WTC11 (cell line): ENCODE measurements at regions of chr6 and their contacts with region 1.

Region 1: DNA sequence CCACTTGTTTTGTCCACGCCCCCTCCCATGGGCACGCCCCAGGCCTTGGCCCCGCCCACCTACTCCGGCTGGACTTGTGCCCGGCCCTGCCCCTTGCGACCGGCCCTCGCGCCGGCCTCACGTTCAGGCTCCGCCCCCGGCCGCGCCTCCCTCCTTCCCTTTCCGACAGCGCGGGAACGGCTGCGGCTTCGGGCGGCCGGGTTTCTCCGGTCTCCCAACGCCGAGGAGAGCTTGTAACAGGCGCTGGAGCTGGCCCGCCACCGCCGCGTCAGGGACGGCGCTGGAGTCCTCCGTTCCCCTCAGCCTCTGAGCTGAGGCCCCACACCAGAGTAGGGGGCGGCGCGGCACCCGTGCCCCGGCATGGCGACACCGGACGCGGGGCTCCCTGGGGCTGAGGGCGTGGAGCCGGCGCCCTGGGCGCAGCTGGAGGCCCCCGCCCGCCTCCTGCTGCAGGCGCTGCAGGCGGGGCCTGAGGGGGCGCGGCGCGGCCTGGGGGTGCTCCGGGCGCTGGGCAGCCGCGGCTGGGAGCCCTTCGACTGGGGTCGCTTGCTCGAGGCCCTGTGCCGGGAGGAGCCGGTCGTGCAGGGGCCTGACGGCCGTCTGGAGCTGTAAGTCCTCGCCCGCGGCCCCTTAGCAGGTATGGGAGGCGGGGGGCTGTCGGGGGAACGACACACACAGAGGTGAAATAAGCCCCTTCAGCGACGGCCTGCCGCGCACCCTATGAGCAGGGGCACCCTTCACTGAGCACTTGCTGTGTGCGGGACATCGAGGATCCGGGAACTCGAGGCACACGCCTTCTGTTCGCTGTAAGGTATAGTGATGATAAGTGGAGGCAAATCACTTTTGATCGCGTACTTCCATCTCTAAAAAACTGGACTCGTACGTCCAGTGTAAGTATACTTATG is at the start of gene FANCE:
- DNase-seq: peak; percentile 100
- ATAC-seq: peak; percentile 95
- H3K4me3 Mint-ChIP-seq: peak within 1 kb of the TSS; percentile 68
- H3K27ac Mint-ChIP-seq: peak within 1 kb of the TSS; percentile 53; the same call in 1 of the 2 replicates
- H3K4me1 Mint-ChIP-seq: peaks cover 34% of the 10 kb centered on the region
- H3K27me3 Mint-ChIP-seq: peaks cover 11% of the 10 kb centered on the region
- CTCF ChIP-seq: no peak
- total RNA-seq, gene FANCE: 15.7 to 22.3 TPM (median 17.6 TPM) in 3 replicates

Region 2: DNA sequence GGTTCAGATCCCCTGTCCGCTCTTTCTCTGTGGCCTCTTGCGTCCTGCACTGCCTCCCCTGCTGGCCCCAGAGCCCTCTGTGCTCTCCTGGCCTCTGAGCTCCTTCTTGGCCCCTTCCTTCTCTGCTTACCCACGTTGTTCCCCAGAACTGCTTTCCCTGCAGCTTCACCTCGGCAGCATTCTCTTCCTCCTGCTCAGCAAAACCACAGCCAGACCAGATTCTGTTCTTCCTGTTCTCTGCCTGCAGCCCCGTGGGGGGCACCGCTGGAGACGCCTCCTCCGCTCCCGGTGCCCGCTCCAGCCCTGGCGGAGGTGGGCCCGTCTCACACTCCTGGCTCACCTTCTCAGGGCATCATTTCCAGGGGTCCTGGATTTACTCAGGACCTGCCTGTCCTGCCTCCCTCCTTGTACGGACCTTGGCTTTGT is 371.0 kb before region 1 on chr6:
- CTCF ChIA-PET with region 1: no interaction called
- POLR2A ChIA-PET with region 1: no interaction called
- DNase-seq: no peak
- ATAC-seq: no peak
- H3K4me3 Mint-ChIP-seq: no peak overlapping the region
- H3K27ac Mint-ChIP-seq: peak overlapping the region; percentile 97
- H3K4me1 Mint-ChIP-seq: peaks cover 14% of the 10 kb centered on the region
- H3K27me3 Mint-ChIP-seq: no peaks in the 10 kb centered on the region
- CTCF ChIP-seq: no peak

Region 3: DNA sequence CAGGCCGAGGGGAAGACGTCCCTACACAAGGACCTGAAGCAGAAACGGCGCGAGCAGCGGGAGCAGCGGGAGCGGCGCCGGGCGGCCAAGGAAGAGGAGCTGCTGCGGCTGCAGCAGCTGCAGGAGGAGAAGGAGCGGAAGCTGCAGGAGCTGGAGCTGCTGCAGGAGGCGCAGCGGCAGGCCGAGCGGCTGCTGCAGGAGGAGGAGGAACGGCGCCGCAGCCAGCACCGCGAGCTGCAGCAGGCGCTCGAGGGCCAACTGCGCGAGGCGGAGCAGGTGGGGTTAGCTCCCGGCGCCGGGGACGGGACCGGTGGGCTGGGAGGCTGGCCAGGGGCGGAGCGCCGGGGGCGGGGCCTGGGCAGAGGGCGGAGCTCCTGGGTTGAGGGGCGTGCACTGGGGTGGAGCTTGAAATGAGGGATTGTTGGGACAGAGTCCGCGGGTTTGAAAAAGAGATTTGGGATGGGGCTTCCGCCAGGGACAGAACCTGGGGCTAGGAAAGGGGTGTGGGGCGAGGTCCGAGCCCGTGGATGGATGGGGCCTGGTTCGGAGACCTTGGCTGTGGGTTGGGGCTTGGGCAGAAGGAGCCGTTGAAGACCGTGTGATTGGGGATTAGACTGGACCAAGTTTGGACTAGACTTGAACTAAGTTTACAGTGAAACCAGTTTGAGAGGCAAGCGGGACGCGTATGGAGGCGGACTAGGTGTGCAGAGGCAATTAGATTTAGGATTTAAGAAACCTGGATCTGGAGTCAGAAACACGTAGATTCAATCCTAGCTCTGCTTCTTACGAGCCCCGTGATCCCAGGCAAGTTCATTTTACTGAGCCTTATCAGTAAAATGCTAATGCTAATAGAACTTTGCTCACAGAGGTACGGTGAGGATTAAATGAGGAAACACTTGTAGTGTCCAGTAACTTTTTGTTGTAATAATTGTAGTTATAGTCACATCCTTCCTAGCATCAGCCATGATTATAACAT is 134.0 kb before region 1 on chr6:
- CTCF ChIA-PET with region 1: interaction called, 20 read pairs
- POLR2A ChIA-PET with region 1: interaction called, 5 read pairs
- DNase-seq: peak; percentile 96
- ATAC-seq: peak; percentile 99
- H3K4me3 Mint-ChIP-seq: peak overlapping the region; percentile 86
- H3K27ac Mint-ChIP-seq: peak overlapping the region; percentile 27; the same call in 1 of the 2 replicates
- H3K4me1 Mint-ChIP-seq: peaks cover 21% of the 10 kb centered on the region
- H3K27me3 Mint-ChIP-seq: peaks cover 25% of the 10 kb centered on the region
- CTCF ChIP-seq: no peak

Region 4: DNA sequence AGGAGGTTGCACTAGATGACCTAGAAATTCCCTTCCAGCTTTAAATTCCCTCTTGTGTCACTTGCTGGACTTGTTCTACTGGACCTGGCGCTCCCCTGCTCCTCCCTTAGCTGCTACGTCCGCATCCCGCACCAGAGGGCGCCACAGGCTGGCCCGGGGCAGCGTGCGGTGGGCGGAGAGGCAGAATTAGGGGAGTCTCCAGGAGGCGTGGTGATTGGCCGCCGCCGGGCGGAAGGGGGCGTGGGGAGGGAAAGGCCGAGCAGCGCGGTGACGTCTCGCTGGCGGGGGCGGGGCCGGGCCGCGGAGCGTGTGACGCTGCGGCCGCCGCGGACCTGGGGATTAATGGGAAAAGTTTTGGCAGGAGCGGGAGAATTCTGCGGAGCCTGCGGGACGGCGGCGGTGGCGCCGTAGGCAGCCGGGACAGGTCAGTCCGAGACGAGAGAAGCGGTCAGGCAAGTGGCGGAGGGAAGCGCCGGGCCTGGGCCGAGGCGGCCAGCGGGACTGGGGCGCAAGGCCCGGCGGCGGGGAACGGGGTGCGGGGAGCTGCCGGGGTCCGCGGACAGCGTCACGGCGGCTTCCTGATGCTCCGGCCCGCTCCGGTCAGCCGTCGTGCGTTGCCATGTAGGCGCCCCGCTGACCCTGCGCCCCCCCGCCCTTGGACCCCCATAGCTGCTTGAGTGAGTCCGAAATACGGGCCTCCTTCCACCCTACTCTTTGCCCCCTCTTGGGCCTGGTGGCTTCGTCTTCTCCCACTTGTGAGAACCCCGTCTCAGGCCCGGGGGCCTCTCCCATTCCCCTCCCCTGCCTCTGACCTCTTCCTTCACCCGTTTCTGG is 110.0 kb before region 1 on chr6 and contains the start of gene PPARD:
- CTCF ChIA-PET with region 1: interaction called, 157 read pairs
- POLR2A ChIA-PET with region 1: interaction called, 5 read pairs
- DNase-seq: peak; percentile 99
- ATAC-seq: peak; percentile 97
- H3K4me3 Mint-ChIP-seq: peak within 1 kb of the TSS; percentile 86
- H3K27ac Mint-ChIP-seq: peak within 1 kb of the TSS; percentile 87
- H3K4me1 Mint-ChIP-seq: peaks cover 20% of the 10 kb centered on the region
- H3K27me3 Mint-ChIP-seq: peaks cover 8% of the 10 kb centered on the region
- CTCF ChIP-seq: peak; percentile 93
- total RNA-seq, gene PPARD: 14.7 to 17.1 TPM (median 16.8 TPM) in 3 replicates

Region 5: DNA sequence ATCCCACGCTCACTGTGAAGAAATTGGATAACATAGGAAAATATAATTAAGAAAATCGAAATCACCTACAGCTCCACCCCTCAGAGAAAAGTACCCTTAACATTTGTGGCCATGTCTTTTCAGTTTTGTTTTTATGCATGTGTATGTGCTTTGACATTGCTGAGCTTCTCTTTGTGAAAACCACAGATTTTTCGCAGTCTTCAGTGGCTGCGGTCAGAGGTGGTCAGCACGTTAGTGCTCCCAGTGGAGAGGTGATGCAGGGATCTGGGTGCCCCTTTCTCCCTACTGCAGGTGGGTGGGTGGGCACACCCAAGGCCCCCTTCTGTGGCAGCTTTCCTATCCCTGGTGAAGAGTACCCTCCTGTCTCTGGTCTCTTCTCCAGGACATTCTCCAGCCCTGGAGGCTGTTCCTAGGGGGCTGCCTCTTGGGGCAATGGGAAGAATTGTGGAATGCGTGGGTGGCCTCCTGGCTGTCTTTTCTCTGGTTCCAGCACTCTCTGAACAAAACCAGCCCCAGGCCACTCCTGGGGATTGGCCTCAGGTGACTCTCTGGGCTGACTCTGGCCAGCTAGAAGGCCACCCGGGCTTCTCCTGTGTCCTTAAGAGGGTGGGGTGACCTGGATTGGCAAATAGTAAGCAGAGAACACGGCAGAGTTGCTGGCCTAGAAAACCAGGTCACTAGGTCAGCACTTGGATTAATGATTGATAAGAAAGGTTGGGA is 50.1 kb before region 1 on chr6:
- CTCF ChIA-PET with region 1: interaction called, 11 read pairs
- POLR2A ChIA-PET with region 1: no interaction called
- DNase-seq: no peak
- ATAC-seq: no peak
- H3K4me3 Mint-ChIP-seq: no peak overlapping the region
- H3K27ac Mint-ChIP-seq: no peak overlapping the region
- H3K4me1 Mint-ChIP-seq: peaks cover 12% of the 10 kb centered on the region
- H3K27me3 Mint-ChIP-seq: no peaks in the 10 kb centered on the region
- CTCF ChIP-seq: no peak

Region 6: GRCh38 chr6:35425284-35425683 is 27.2 kb before region 1 on chr6:
- CTCF ChIA-PET with region 1: interaction called, 38 read pairs
- POLR2A ChIA-PET with region 1: no interaction called
- DNase-seq: no peak
- ATAC-seq: no peak
- H3K4me3 Mint-ChIP-seq: no peak overlapping the region
- H3K27ac Mint-ChIP-seq: no peak overlapping the region
- H3K4me1 Mint-ChIP-seq: peaks cover 23% of the 10 kb centered on the region
- H3K27me3 Mint-ChIP-seq: no peaks in the 10 kb centered on the region
- CTCF ChIP-seq: no peak

Region 7: DNA sequence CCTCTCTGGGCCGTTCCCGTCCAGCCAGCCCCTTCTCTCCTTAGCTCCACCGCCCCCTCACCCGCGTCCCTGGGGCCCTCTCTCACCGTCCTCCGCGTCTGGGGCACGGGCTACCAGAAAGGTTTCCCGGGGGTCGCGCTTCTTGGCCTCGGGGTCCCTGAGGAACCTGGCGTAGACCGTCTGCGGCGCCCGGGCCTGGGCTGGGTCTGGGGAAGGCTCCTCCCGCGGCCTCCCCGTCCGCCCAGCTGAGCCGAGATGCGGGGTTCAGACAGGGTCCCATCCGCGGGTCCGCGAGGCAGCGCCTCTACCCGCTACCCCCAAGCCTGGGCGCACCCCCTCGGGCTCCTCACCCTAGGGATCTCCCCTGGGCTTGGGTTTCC is 59.1 kb after region 1 on chr6:
- CTCF ChIA-PET with region 1: no interaction called
- POLR2A ChIA-PET with region 1: no interaction called
- DNase-seq: peak; percentile 28
- ATAC-seq: peak; percentile 11
- H3K4me3 Mint-ChIP-seq: peak overlapping the region; percentile 55
- H3K27ac Mint-ChIP-seq: no peak overlapping the region
- H3K4me1 Mint-ChIP-seq: peaks cover 39% of the 10 kb centered on the region
- H3K27me3 Mint-ChIP-seq: peaks cover 27% of the 10 kb centered on the region
- CTCF ChIP-seq: no peak